Posterior cingulate gyrus (tissue), 11 donors: ENCODE measurements at regions of chr4 and their contacts with region 1.

Region 1: DNA sequence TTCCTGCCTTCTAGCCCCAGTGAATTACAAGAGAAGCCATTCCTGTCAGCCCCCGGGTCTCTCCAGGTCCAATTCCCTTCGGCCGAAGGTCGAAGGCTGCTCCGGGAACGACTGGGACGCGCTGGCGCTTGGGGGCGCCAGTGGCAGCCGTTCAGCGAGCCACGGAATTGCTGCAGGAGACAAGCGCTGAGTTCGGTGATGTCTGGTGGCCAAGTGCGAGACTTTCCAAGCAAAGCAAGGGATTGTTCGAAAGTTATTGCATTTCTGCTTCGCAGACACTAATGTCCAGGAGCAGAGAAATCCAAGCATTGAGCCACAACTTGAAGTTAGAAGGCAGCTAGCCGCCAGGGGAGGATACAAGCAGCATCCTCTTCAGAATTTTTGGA is 1.1 kb upstream of the DKK2 start:
- DNase-seq: peak; percentile 35 to 95 (median 62)

Region 2: GRCh38 chr4:106048250-106048971 is 988.8 kb before region 1 on chr4:
- intact Hi-C with region 1: no loop called
- DNase-seq: no peak

Region 3: DNA sequence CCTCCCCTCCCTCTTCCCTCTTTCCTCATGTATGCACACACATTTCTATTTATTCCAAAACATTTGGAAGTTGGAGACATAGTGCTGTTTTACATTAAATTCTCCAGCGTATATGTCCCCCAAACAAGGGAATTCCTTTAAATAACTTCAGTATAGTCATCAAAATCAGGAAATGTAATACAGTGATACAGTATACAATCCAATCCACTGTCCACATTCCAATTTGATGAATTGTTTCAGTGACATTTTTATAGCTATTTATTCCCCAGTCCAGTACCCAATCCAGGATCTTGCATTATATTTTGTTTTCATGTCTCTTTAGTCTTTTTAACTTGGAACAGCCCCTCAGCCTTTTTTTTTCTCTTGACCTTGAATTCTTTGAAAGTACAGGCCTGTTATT is 234.1 kb before region 1 on chr4:
- intact Hi-C with region 1: no loop called
- DNase-seq: no peak

Region 4: GRCh38 chr4:106835919-106836318 is 201.3 kb before region 1 on chr4:
- intact Hi-C with region 1: no loop called
- DNase-seq: no peak

Region 5: DNA sequence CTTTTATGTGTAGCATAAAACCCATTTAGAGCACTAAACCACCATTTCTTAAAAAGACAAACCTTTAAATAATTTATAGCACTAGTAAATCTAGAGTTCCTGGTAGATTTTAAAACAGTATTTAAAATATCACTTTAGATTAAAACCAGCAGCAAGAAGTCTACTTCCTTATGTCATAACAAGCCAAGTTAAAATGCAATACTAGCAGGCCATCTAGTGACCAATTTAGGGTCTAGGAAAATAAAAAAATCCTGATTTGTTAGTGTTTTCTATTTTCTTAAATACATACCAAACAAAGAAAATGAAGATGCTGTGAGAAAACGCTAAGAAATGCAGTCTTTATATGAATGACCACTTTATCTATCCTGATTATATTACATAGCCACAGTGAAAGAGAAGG is 628.9 kb after region 1 on chr4:
- intact Hi-C with region 1: loop called (anchors 10 kb)
- DNase-seq: no peak